Panc1 (cell line): ENCODE measurements at regions of chr2 and their contacts with region 1.

Region 1: GRCh38 chr2:219642465-219643080 is 15.1 kb downstream of the SLC4A3 start:
- DNase-seq: peak; percentile 85
- ATAC-seq: peak; percentile 95
- H3K4me3 ChIP-seq: no peak overlapping the region
- H3K27ac ChIP-seq: no peak overlapping the region
- H3K4me1 ChIP-seq: no peaks in the 10 kb centered on the region; the same call in 1 of the 2 replicates
- H3K27me3 ChIP-seq: no peaks in the 10 kb centered on the region
- CTCF ChIP-seq: peak; percentile 99

Region 2: GRCh38 chr2:218292048-218293014 is 1350.2 kb before region 1 on chr2 and contains the start of gene TMBIM1:
- CTCF ChIA-PET with region 1: interaction called, 12 read pairs
- POLR2A ChIA-PET with region 1: no interaction called
- in situ Hi-C with region 1: no loop called
- intact Hi-C with region 1: no loop called
- DNase-seq: no peak
- ATAC-seq: peak; percentile 94
- H3K4me3 ChIP-seq: peak within 1 kb of the TSS; percentile 69 to 80
- H3K27ac ChIP-seq: peak within 1 kb of the TSS; percentile 88
- H3K4me1 ChIP-seq: peaks cover 42% of the 10 kb centered on the region
- H3K27me3 ChIP-seq: no peaks in the 10 kb centered on the region
- CTCF ChIP-seq: peak; percentile 99
- total RNA-seq, gene TMBIM1: 114 TPM

Region 3: DNA sequence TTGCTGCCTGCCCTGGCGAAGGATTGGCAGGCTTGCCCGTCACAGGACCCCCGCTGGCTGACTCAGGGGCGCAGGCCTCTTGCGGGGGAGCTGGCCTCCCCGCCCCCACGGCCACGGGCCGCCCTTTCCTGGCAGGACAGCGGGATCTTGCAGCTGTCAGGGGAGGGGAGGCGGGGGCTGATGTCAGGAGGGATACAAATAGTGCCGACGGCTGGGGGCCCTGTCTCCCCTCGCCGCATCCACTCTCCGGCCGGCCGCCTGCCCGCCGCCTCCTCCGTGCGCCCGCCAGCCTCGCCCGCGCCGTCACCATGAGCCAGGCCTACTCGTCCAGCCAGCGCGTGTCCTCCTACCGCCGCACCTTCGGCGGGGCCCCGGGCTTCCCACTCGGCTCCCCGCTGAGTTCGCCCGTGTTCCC is 224.4 kb before region 1 on chr2 and contains the start of gene DES:
- CTCF ChIA-PET with region 1: no interaction called
- POLR2A ChIA-PET with region 1: no interaction called
- in situ Hi-C with region 1: no loop called
- intact Hi-C with region 1: no loop called
- DNase-seq: no peak
- ATAC-seq: no peak
- H3K4me3 ChIP-seq: no peak within 1 kb of the TSS
- H3K27ac ChIP-seq: no peak within 1 kb of the TSS
- H3K4me1 ChIP-seq: no peaks in the 10 kb centered on the region
- H3K27me3 ChIP-seq: no peaks in the 10 kb centered on the region
- CTCF ChIP-seq: no peak
- total RNA-seq, gene DES: 0.69 TPM

Region 4: DNA sequence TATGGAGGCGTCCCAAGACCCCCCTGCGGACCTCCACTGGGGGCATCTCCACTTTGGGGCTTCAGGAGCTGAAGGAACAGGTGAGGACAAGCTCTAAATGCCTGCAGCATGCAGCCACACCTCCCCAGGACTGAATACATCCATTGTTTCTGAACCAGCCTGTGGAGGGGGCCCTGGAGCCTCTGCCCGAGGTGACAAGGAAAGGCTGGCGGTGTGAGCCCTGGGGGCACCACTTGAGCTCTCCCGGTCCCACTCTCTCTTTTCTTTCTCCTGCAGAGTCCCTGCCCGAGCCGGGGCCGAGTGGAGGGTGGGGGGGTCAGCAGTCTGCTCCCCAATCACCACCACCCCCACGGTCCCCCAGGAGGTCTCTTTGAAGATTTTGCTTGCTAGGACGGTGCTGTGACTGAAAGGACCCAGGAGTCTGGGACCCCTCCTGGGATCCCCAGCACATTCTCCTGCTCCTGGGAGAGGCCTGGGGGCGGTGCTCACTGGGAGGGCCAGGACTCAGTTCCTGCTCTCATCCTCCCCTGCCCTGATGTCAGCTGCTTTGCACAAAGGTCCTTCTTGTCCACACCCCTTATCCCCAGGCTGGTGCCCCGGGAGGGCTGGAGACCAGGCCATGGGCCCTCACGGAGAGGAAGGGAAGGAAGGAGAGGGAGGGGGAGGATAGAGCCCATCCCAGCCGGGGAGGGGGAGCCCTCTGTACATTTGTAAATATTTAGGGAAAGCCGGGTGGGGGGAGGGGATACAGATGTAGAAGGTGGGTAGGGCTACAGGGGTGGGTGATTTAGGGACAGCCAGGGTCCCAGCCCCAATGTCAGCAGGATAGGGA is 104.7 kb before region 1 on chr2:
- CTCF ChIA-PET with region 1: interaction called, 4 read pairs
- POLR2A ChIA-PET with region 1: interaction called, 6 read pairs
- in situ Hi-C with region 1: no loop called
- intact Hi-C with region 1: loop called (anchors 1 kb)
- DNase-seq: no peak
- ATAC-seq: no peak
- H3K4me3 ChIP-seq: no peak overlapping the region
- H3K27ac ChIP-seq: no peak overlapping the region
- H3K4me1 ChIP-seq: peaks cover 9% of the 10 kb centered on the region; the same call in 1 of the 2 replicates
- H3K27me3 ChIP-seq: no peaks in the 10 kb centered on the region
- CTCF ChIP-seq: no peak

Region 5: DNA sequence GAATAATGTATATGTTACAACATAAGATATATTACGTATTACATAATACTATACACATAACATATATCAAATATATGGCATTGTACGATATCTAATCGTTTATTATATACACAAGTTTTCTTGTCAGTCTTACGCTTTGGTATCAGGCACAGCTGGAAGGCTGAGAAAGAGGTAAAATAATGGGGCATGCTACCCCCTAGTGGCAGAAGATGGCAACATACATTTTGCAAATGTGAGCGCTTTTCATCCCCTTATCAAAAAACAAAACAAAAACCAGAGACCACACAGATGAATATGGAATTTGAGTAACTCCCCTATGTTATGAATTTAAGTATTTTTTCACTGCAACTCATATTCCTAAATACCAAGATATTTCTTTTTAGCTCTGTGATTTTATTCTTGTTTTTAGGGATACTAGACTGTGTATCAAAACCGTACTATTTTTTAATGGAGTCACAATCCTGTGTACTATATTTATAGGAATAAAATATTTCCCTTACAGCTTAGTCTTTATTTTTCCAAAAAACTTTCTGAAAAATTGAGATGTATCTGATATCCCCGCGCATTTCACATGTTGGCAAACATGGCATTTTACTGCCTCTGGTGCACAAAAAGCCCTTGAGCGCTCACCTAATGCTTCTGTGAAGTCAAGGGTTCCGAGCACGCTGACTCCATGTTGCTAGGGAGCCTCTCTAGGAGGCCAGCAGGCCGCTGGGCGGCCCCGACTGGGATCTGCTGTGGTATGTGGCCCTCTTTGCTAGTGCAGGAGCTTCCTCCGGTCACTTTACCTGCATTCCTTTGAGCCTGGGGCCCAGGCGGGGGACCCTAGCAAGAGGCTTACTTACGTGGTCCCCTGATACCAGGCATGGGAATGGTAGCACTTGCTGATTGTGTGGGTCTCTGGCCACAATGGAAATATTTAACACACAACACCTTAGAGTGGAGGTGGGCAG is 47.4 kb after region 1 on chr2:
- CTCF ChIA-PET with region 1: no interaction called
- POLR2A ChIA-PET with region 1: no interaction called
- in situ Hi-C with region 1: no loop called
- intact Hi-C with region 1: loop called (anchors 1 kb)
- DNase-seq: no peak
- ATAC-seq: peak; percentile 40; the same call in 1 of the 2 replicates
- H3K4me3 ChIP-seq: no peak overlapping the region
- H3K27ac ChIP-seq: no peak overlapping the region
- H3K4me1 ChIP-seq: peaks cover 21% of the 10 kb centered on the region
- H3K27me3 ChIP-seq: no peaks in the 10 kb centered on the region; the same call in none of the 2 replicates
- CTCF ChIP-seq: peak; percentile 78; the same call in 1 of the 2 replicates

Region 6: GRCh38 chr2:219798430-219798829 is 155.9 kb after region 1 on chr2:
- CTCF ChIA-PET with region 1: no interaction called
- POLR2A ChIA-PET with region 1: no interaction called
- in situ Hi-C with region 1: no loop called
- intact Hi-C with region 1: no loop called
- DNase-seq: no peak
- ATAC-seq: no peak
- H3K4me3 ChIP-seq: no peak overlapping the region
- H3K27ac ChIP-seq: no peak overlapping the region
- H3K4me1 ChIP-seq: no peaks in the 10 kb centered on the region
- H3K27me3 ChIP-seq: no peaks in the 10 kb centered on the region; the same call in 1 of the 2 replicates
- CTCF ChIP-seq: no peak

Region 7: DNA sequence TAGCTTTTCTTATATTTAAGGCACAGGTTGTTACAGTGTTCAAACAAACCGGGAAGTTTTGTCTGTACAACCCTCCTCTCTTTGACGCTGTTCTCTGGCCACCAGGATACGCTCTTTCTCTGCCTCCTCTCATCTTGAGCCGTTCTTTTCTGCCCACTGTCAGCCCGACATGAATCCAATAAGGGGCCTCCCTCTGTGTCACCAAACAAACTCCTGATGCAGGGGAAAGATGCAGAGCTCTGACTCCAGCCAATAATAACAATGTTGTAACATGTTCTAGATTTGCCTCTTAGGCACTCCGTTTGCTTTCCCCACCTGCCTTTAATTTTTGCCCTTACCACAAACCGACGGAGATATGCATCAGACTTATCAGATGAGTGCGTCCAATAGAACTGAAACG is 434.2 kb after region 1 on chr2:
- CTCF ChIA-PET with region 1: no interaction called
- POLR2A ChIA-PET with region 1: no interaction called
- in situ Hi-C with region 1: no loop called
- intact Hi-C with region 1: no loop called
- DNase-seq: no peak
- ATAC-seq: no peak
- H3K4me3 ChIP-seq: no peak overlapping the region
- H3K27ac ChIP-seq: no peak overlapping the region
- H3K4me1 ChIP-seq: no peaks in the 10 kb centered on the region
- H3K27me3 ChIP-seq: no peaks in the 10 kb centered on the region
- CTCF ChIP-seq: peak; percentile 23